Adrenal gland (tissue), 19 donors: ENCODE measurements at regions of chr1 and their contacts with region 1.

Region 1: DNA sequence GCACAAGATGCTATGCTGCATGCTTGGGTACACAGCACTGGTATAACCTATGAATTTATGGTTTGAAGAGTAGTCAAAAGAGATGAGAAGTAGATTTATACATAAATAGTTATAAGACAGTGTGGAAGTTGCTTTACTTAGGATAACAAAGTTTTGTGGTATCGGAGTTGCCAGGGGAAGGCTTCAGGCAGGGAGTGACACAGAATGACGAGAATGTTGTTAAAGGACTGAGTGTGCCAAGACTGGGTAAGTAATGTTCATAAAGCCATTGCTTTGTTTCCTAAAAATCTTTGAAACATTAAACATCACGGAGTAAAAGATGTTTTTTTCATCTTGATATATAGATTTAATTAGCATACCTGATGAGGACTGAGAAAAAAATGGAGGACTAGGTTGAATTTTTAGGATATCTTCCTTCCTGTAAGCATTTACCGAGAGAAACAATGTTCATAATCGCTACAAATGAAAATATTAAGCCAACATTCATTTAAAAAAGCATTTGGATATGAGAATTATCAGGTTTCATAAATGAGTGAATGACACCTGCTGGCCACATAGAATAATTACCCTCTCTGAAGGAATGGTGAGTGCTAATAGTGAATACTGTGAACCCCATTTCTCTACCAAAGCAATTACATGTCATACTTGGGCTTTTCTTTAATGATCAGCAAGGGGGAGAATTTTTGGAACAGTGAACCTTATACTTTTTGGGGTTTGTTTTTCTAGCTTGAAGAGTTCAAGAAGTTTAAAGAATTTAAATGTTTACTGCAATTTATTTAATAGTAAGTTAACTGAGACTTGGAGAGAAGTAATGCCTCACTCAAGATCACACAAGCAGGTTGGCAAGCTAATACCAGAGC is 28.4 kb downstream of the EXTL2 start:
- DNase-seq: no peak
- H3K4me3 ChIP-seq: peak overlapping the region in 1 of 4 donors; percentile 25
- H3K27ac ChIP-seq: no peak overlapping the region
- H3K4me1 ChIP-seq: peaks cover 0 to 6% of the 10 kb centered on the region in 2 donors
- H3K27me3 ChIP-seq: no peaks in the 10 kb centered on the region
- CTCF ChIP-seq: peak; percentile 42 to 86 (median 73)
- POLR2A ChIP-seq: no peak

Region 2: DNA sequence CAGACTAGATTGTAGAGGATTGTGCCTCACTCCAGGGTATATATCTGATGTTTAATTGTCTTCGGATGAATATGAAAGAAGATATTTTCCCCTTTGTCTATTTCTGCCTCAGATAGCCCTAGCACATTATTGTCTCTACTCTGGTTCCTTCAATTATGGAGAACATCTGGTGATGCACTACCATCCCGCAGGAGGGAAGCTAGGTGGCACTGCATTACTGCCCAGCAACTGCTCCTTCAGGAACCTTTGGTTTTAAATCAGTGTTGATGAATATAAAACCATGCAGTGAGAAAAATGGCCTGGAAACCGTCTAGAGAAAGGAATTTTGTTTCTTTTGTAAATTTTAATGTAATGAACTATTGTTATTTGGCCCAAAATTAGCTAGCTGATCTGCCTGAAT is 259.8 kb before region 1 on chr1:
- intact Hi-C with region 1: loop called in 1 of 2 experiments (anchors 2 kb)
- DNase-seq: peak; percentile 53 to 84 (median 74)
- H3K4me3 ChIP-seq: no peak overlapping the region
- H3K27ac ChIP-seq: no peak overlapping the region
- H3K4me1 ChIP-seq: peaks cover 0 to 8% of the 10 kb centered on the region in 2 donors
- H3K27me3 ChIP-seq: no peaks in the 10 kb centered on the region
- CTCF ChIP-seq: peak; percentile 69 to 90 (median 84)
- POLR2A ChIP-seq: no peak

Region 3: DNA sequence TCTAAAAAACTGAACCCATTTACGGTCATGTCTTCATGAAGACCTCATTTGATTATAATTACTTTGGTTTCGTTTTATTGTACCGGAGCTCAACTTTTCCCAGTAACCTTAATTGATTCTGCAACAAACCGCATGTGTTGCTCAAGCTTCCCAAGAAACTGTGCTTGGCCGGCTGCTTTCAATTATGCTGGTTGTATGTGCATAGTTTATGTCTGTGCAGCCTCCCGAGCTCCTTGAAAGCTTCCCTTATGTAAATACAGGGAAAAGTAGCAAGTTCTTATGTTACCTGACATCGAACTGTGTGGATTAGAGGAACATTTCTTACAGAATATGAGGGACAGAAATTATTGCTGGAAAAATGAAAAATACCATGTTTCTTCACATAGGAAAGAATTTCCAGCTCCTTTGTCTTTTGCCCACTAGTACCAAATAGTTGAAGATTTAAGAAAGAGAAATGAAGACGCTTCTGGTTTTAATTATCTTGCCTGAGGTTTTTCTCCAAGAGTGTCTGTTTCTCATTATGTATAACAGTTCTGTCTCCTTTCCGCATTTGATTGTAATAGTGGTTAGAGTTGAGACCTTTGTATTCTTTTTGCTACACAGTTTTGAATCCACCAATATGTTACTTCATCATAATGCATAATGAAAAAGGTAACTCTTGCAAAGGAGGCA is 144.6 kb before region 1 on chr1:
- intact Hi-C with region 1: loop called in 1 of 2 experiments (anchors 10 kb)
- DNase-seq: peak in 6 of 7 donors; percentile 38 to 65 (median 56)
- H3K4me3 ChIP-seq: peak overlapping the region in 3 of 4 donors; percentile 2 to 60 (median 7)
- H3K27ac ChIP-seq: peak overlapping the region in 4 of 5 donors; percentile 32 to 73 (median 70)
- H3K4me1 ChIP-seq: peaks cover 23 to 52% of the 10 kb centered on the region in 2 donors
- H3K27me3 ChIP-seq: no peaks in the 10 kb centered on the region
- CTCF ChIP-seq: no peak
- POLR2A ChIP-seq: no peak